ENCODE measurements at regions of chr11 and their contacts with region 1.

Region 1: GRCh38 chr11:69296890-69297786 is 3.2 kb downstream of the MYEOV start:
- DNase-seq: peak in 1 of 2 experiments; percentile 31
- H3K4me3 ChIP-seq: no peak overlapping the region
- H3K27ac ChIP-seq: no peak overlapping the region
- H3K4me1 ChIP-seq: peaks cover 0 to 2% (median under 1%) of the 10 kb centered on the region in 4 experiments; a peak in 2 of 7 replicates
- H3K27me3 ChIP-seq: no peaks in the 10 kb centered on the region; a peak in 1 of 7 replicates
- CTCF ChIP-seq: no peak
- EP300 ChIP-seq: no peak
- POLR2A ChIP-seq: no peak
- RAD21 ChIP-seq: no peak

Region 2: GRCh38 chr11:68927280-68928135 is 369.6 kb before region 1 on chr11:
- CTCF ChIA-PET with region 1: no interaction called
- POLR2A ChIA-PET with region 1: no interaction called
- DNase-seq: no peak
- H3K4me3 ChIP-seq: no peak overlapping the region
- H3K27ac ChIP-seq: no peak overlapping the region
- H3K4me1 ChIP-seq: no peaks in the 10 kb centered on the region
- H3K27me3 ChIP-seq: no peaks in the 10 kb centered on the region
- CTCF ChIP-seq: no peak
- EP300 ChIP-seq: no peak
- POLR2A ChIP-seq: no peak
- RAD21 ChIP-seq: no peak

Region 3: DNA sequence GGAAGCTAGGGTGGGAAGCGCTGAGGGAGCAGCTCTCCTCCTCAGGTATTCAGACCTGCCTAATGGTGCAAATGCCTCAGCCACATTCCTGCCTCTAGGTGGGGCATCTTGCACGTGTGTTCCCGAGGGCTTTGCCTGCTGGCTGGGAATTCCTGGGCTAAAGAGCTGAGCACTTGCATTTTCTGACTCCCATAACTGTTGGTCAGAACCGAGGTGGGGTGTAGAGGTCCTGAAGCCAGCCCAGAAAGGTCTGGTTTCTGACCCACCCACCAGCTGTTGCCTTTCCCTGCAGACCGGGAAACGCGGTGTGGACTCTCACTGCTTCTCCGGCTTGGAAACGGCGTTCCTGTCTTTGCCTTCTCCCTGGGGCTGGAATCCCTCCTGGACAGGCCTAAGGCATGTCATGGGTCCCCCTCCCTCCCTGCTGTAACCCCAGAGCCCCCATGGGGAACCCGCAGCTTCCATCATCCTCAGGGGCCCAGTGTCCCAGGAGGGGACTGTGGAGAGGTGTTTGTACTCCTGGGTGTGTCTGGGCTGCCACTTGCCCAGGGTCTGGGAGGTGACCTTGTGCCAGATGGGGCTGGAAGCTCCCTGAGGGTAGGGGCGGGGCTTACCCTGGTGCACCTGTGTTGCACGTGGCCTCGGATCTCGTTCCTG is 165.4 kb before region 1 on chr11:
- CTCF ChIA-PET with region 1: interaction called, 22 read pairs
- POLR2A ChIA-PET with region 1: no interaction called
- DNase-seq: peak; percentile 81 to 89
- H3K4me3 ChIP-seq: no peak overlapping the region
- H3K27ac ChIP-seq: no peak overlapping the region
- H3K4me1 ChIP-seq: peaks cover 0 to 6% (median 2%) of the 10 kb centered on the region in 4 experiments; a peak in 4 of 7 replicates
- H3K27me3 ChIP-seq: no peaks in the 10 kb centered on the region; a peak in 1 of 7 replicates
- CTCF ChIP-seq: peak; percentile 91 to 98 (median 97)
- EP300 ChIP-seq: peak in 1 of 2 experiments; percentile 40; a peak in 1 of 3 replicates
- POLR2A ChIP-seq: no peak
- RAD21 ChIP-seq: peak; percentile 91

Region 4: DNA sequence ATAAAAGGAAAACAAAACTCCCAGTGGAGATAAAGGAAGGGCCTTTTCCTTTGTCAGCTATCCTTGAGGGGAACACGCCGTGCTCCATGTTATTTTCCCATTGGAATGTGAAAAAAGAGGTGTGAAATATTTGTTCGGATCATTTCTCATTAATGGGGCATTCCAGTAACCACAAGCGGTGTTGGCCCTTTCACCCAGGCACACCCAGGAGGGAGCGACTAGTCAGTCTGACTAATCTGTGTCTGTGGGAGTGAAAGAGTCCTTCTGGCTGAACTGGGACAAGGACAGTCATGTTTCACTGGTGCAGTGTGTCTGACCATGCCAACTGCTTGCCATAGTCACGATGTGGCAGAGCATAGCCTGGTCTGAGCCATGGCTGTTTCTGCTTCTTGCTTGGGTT is 16.1 kb before region 1 on chr11:
- CTCF ChIA-PET with region 1: interaction called, 24 read pairs
- POLR2A ChIA-PET with region 1: interaction called, 3 read pairs
- DNase-seq: no peak
- H3K4me3 ChIP-seq: no peak overlapping the region
- H3K27ac ChIP-seq: no peak overlapping the region
- H3K4me1 ChIP-seq: no peaks in the 10 kb centered on the region; a peak in 1 of 7 replicates
- H3K27me3 ChIP-seq: no peaks in the 10 kb centered on the region; a peak in 2 of 7 replicates
- CTCF ChIP-seq: no peak
- EP300 ChIP-seq: no peak
- POLR2A ChIP-seq: no peak
- RAD21 ChIP-seq: no peak

Region 5: DNA sequence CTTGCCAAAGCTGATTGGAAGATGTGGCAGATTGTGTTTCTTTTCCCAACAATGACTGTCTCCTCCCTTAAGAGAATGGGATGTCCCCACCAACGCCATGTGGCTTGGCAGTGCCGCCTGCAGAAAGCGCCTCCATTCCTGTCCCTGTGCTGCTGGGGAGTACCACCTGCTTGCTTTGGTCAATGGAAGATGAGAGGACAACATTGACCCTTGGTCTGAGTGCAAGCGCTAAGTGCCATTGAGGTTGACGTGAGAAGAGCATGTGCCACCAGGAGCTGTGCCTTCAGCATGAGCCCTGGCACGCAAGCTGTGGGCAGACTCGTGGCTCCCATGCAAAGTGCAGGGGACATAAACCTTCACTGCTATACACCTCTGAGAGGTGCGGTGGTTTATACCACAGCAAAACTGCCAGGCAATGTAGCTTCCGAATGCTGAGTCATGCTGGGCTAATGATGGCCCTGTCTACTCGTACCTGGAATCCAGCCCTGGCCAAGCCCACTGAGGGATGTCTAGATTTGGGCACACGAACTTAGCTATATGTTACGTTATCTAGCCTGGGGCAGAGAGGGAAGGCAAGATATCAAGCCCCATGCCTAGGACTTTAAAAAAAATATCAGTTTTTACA is 38.8 kb after region 1 on chr11:
- CTCF ChIA-PET with region 1: interaction called, 12 read pairs
- POLR2A ChIA-PET with region 1: no interaction called
- DNase-seq: no peak
- H3K4me3 ChIP-seq: no peak overlapping the region
- H3K27ac ChIP-seq: no peak overlapping the region
- H3K4me1 ChIP-seq: peaks cover 0 to 3% (median 0%) of the 10 kb centered on the region in 4 experiments; a peak in 2 of 7 replicates
- H3K27me3 ChIP-seq: no peaks in the 10 kb centered on the region; a peak in 1 of 7 replicates
- CTCF ChIP-seq: no peak
- EP300 ChIP-seq: no peak
- POLR2A ChIP-seq: no peak
- RAD21 ChIP-seq: no peak

Region 6: GRCh38 chr11:69443138-69443967 is 146.2 kb after region 1 on chr11:
- CTCF ChIA-PET with region 1: interaction called, 10 read pairs
- POLR2A ChIA-PET with region 1: no interaction called
- DNase-seq: peak; percentile 70 to 91
- H3K4me3 ChIP-seq: peak overlapping the region in 1 of 4 experiments; percentile 38; a peak in 1 of 8 replicates
- H3K27ac ChIP-seq: 0 out of 2 replicates have a peak overlapping the region, but pooled peaks have one; percentile 3
- H3K4me1 ChIP-seq: peaks cover 13 to 37% (median 33%) of the 10 kb centered on the region in 4 experiments
- H3K27me3 ChIP-seq: no peaks in the 10 kb centered on the region; a peak in 2 of 7 replicates
- CTCF ChIP-seq: peak in 1 of 3 experiments; percentile 13; a peak in 1 of 4 replicates
- EP300 ChIP-seq: no peak
- POLR2A ChIP-seq: peak in 1 of 2 experiments; percentile 64; a peak in 1 of 3 replicates
- RAD21 ChIP-seq: peak in 1 of 2 experiments; percentile 0; a peak in 1 of 4 replicates

Region 7: GRCh38 chr11:69540118-69540502 is 243.0 kb after region 1 on chr11:
- CTCF ChIA-PET with region 1: no interaction called
- POLR2A ChIA-PET with region 1: no interaction called
- DNase-seq: peak in 1 of 2 experiments; percentile 59
- H3K4me3 ChIP-seq: no peak overlapping the region
- H3K27ac ChIP-seq: no peak overlapping the region
- H3K4me1 ChIP-seq: peaks cover 0 to 9% (median 2%) of the 10 kb centered on the region in 4 experiments; a peak in 2 of 7 replicates
- H3K27me3 ChIP-seq: no peaks in the 10 kb centered on the region
- CTCF ChIP-seq: 0 out of 4 replicates have a peak, but pooled peaks of 1 of the 3 experiments have one; percentile 9
- EP300 ChIP-seq: no peak
- POLR2A ChIP-seq: no peak
- RAD21 ChIP-seq: peak in 1 of 2 experiments; percentile 35; a peak in 1 of 4 replicates